ENCODE measurements at regions of chr16 and their contacts with region 1.

Region 1: GRCh38 chr16:1959269-1960049 is at the start of gene NDUFB10:
- DNase-seq: peak; percentile 95

Region 2: GRCh38 chr16:1839554-1839953 is 119.9 kb before region 1 on chr16:
- in situ Hi-C with region 1: no loop called
- DNase-seq: no peak

Region 3: DNA sequence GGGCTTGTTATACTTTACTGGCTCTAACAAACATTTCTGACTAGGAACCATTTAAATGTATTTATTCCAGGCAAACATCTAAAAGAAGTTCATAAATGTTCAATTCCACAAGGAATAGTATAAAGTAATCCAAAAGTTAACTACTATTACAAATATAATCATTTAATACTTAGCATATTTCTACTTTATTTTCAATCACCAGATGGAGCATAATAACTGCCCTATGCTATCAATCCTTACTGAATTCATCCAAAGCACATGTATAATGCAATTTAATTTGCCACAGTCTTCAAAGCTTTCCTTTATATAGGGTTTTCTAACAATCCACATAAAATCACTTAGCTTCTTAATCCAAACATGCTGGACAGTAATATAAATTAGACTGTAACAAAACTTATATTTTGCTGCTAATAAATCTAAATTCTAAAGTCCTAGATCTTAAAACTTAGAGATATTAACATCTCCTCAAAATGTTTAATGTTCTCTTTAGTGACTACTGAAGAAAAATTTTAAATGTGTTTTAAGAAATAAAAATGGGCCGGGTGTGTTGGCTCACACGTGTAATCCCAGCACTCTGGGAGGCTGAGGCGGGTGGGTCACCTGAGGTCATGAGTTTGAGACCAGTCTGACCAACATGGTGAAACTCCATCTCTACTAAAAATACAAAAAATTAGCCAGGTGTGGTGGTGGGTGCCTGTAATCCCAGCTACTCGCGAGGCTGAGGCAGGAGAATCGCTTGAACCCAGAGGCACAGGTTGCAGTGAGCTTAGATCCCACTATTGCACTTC is 93.4 kb before region 1 on chr16:
- in situ Hi-C with region 1: loop called (anchors 5 kb)
- DNase-seq: no peak

Region 4: GRCh38 chr16:2047330-2048115 is 88.1 kb after region 1 on chr16 and contains the starts of genes NTHL1 and TSC2:
- in situ Hi-C with region 1: no loop called
- DNase-seq: peak; percentile 98

Region 5: GRCh38 chr16:2090777-2091546 is 131.5 kb after region 1 on chr16:
- in situ Hi-C with region 1: no loop called
- DNase-seq: peak; percentile 87